ENCODE measurements at regions of chr1 and their contacts with region 1.

Region 1: GRCh38 chr1:96236156-96236739 is 485.3 kb upstream of the PTBP2 start:
- DNase-seq: no peak
- ATAC-seq: no peak
- H3K4me3 ChIP-seq: no peak overlapping the region
- H3K4me3 Mint-ChIP-seq: no peak overlapping the region
- H3K27ac ChIP-seq: no peak overlapping the region
- H3K27ac Mint-ChIP-seq: no peak overlapping the region
- H3K4me1 ChIP-seq: no peaks in the 10 kb centered on the region
- H3K4me1 Mint-ChIP-seq: no peaks in the 10 kb centered on the region
- H3K27me3 ChIP-seq: no peaks in the 10 kb centered on the region
- H3K27me3 Mint-ChIP-seq: no peaks in the 10 kb centered on the region

Region 2: DNA sequence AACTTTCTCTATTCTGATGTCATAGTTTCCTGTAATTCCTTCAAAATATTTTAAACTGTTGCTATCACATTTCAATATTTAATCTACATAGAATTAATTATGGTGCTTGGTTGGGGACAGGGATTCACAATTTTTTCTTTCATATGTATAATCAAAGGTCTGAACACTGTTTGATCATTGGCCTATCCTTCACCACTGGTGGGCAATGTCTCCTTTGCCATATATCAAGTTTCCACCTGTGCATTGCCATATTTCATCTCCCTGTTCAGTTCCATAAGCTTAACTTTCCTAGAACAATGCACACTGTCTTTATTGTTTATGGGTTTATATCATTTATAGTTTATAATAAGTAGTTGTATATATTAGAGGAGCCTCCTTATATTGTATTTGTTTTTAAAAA is 110.5 kb after region 1 on chr1:
- CTCF ChIA-PET with region 1: no interaction called
- POLR2A ChIA-PET with region 1: no interaction called
- intact Hi-C with region 1: no loop called
- DNase-seq: no peak
- ATAC-seq: no peak
- H3K4me3 ChIP-seq: no peak overlapping the region
- H3K4me3 Mint-ChIP-seq: no peak overlapping the region
- H3K27ac ChIP-seq: no peak overlapping the region
- H3K27ac Mint-ChIP-seq: no peak overlapping the region
- H3K4me1 ChIP-seq: no peaks in the 10 kb centered on the region
- H3K4me1 Mint-ChIP-seq: no peaks in the 10 kb centered on the region
- H3K27me3 ChIP-seq: no peaks in the 10 kb centered on the region
- H3K27me3 Mint-ChIP-seq: peaks cover 0 to 4% (median 0%) of the 10 kb centered on the region in 5 donors

Region 3: GRCh38 chr1:96756789-96757188 is 520.5 kb after region 1 on chr1:
- CTCF ChIA-PET with region 1: no interaction called
- POLR2A ChIA-PET with region 1: no interaction called
- intact Hi-C with region 1: loop called in 1 of 2 experiments (anchors 5 kb)
- DNase-seq: no peak
- ATAC-seq: no peak
- H3K4me3 ChIP-seq: no peak overlapping the region
- H3K4me3 Mint-ChIP-seq: no peak overlapping the region
- H3K27ac ChIP-seq: no peak overlapping the region
- H3K27ac Mint-ChIP-seq: peak overlapping the region in 1 of 9 donors; percentile 6
- H3K4me1 ChIP-seq: no peaks in the 10 kb centered on the region
- H3K4me1 Mint-ChIP-seq: peaks cover 0 to 12% (median 5%) of the 10 kb centered on the region in 7 donors
- H3K27me3 ChIP-seq: no peaks in the 10 kb centered on the region
- H3K27me3 Mint-ChIP-seq: no peaks in the 10 kb centered on the region

Measured in naive thymus-derived CD4-positive, alpha-beta T cell (primary cell).